ENCODE measurements at regions of chr12 and their contacts with region 1.

Region 1: DNA sequence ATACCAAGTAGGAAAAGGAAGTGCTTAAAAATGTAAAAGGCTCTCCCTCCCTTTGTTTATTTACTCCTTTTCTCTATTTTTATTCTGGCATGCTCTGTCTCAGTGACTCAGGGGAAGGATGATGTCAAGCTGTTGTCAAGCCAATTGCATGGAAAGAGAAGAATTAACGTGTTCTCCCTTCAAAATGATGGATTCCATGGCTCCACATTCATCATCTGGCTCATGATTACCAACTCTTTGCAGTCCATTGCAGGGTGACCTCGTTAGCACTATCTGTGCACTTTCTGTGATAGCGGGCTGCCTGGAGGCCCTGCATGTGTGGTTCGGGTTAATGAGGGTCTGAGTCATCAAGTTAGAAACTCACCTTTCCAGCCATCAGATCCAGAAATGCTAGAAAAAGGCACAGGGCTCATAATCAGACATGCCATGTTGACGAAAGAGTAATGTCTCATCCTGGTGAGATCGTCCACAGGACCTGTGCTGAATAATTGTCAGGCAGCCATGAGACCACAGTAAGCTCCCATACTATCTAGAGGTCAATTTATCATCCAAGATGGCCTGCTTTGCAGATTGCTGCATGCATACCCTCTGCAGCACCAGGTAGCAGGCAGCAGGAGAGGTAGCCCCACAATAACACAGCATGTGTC is 79.2 kb upstream of the BTG1 start:
- DNase-seq: peak; percentile 47 to 84
- H3K4me3 ChIP-seq: no peak overlapping the region
- H3K27ac ChIP-seq: peak overlapping the region; percentile 31
- H3K4me1 ChIP-seq: peaks cover 14% of the 10 kb centered on the region
- H3K27me3 ChIP-seq: no peaks in the 10 kb centered on the region
- CTCF ChIP-seq: no peak

Region 2: GRCh38 chr12:92183575-92183974 is 41.2 kb before region 1 on chr12:
- CTCF ChIA-PET with region 1: no interaction called
- POLR2A ChIA-PET with region 1: no interaction called
- intact Hi-C with region 1: no loop called
- DNase-seq: no peak
- H3K4me3 ChIP-seq: no peak overlapping the region
- H3K27ac ChIP-seq: no peak overlapping the region
- H3K4me1 ChIP-seq: 0 out of 2 replicates have a peak, but pooled peaks cover 4% of the 10 kb centered on the region
- H3K27me3 ChIP-seq: no peaks in the 10 kb centered on the region
- CTCF ChIP-seq: no peak

Region 3: DNA sequence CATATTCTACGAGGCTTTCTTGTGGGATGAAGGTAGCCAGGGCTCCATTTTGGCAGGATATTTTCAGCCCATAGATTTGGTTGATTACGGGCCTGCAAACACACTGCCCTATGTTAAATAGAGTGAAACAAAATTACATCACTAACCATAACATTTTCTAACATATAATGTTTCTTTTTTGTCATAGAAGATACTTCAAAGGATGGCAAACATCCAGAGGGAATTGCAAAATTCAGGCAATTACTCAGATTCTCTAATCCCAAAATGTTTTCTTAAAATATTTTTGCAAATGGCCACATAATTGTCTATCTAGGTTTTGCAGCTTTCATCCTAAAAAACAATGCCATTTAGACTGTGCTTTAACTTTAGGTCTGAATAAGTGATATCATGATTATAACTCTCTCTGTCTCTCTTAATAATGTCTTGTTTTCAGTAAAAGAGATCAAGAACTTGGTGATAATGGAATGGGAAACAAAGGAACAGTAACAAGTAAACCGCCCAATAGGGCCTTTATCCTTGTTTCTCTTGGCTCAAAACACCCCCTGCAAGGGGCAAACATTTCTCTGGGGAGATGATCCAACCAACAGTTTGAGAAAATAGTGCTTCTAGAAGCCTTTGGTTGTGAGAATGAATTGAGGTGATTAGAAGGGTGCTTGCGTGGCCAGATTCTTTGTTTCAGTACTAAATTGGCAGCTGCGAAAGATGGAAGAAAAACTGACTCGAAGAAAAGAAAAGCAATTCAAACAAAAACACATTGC is 24.8 kb before region 1 on chr12:
- CTCF ChIA-PET with region 1: no interaction called
- POLR2A ChIA-PET with region 1: interaction called, 14 read pairs
- intact Hi-C with region 1: no loop called
- DNase-seq: no peak
- H3K4me3 ChIP-seq: no peak overlapping the region
- H3K27ac ChIP-seq: no peak overlapping the region
- H3K4me1 ChIP-seq: no peaks in the 10 kb centered on the region
- H3K27me3 ChIP-seq: no peaks in the 10 kb centered on the region
- CTCF ChIP-seq: no peak

Measured in PC-9 (cell line).